PC-3 (cell line): ENCODE measurements at regions of chr4 and their contacts with region 1.

Region 1: GRCh38 chr4:22515888-22516541 is at the start of gene ADGRA3:
- DNase-seq: peak; percentile 71
- ATAC-seq: peak; percentile 79
- H3K4me3 ChIP-seq: peak within 1 kb of the TSS; percentile 72
- H3K27ac ChIP-seq: peak within 1 kb of the TSS; percentile 76
- H3K4me1 ChIP-seq: peaks cover 19% of the 10 kb centered on the region
- H3K27me3 ChIP-seq: no peaks in the 10 kb centered on the region
- CTCF ChIP-seq: no peak
- total RNA-seq, gene ADGRA3: 29.0 and 35.7 TPM in 2 replicates

Region 2: DNA sequence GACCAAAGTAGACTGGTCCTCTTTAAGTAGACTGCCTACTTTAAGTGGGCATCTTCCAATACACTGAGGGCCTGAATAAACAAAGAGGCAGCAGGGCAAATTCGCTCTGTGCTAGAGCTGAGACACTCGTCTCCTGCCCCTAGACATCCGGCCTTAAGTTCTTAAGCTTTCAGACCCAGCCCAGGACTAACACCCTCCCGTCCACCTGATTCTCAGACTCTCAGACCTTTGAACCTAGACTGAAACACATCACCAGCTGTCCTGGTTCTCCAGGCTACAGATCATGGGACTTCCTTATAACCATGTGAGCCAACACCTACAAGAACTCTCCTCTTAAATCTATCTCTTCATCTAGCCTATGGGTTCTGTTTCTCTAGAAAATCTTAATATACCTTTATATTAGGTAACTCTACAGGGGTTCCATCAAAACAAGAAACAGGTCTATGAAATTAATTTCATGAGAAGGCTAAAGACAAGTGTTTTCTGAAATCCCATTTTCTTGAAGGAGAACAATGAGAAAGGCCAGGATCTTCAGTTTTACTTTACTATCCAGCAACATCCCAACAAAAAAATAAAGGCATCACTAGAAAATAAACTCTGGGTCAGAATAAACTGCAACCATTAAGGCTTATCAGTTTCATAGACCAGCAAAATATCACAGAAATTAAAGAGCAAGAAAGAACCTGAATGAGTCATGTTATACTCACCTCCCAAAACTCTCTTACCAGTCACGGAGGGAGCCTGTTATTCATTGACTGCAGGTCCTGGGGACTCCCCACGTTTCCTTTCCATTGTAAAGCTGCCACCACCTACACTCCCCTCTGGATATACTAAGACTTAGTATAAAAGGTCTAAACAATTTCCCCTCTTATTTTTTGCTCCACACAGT is 14.9 kb before region 1 on chr4:
- CTCF ChIA-PET with region 1: no interaction called
- POLR2A ChIA-PET with region 1: interaction called, 6 read pairs
- intact Hi-C with region 1: loop called (anchors 1 kb)
- DNase-seq: peak; percentile 84
- ATAC-seq: peak; percentile 86
- H3K4me3 ChIP-seq: peak overlapping the region; percentile 61
- H3K27ac ChIP-seq: no peak overlapping the region
- H3K4me1 ChIP-seq: peaks cover 22% of the 10 kb centered on the region
- H3K27me3 ChIP-seq: no peaks in the 10 kb centered on the region
- CTCF ChIP-seq: no peak

Region 3: DNA sequence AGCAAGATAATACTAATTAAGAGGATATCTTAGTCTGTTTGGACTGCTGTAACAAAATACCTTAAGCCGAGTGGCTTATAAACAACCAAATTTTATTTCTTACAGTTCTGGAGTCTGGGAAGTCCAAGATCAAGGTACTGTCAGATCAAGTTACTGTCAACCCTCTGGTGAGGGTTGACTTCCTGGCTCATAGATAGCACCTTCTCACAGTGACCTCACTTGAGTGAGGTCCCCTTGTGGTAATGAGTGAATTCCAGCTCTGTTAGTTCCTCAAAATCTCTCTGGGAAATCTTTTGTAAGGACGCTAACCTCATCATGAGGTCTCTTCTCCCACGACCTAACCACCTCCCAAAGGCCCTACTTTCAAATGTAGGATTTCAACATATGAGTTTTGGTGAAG is 36.8 kb after region 1 on chr4:
- CTCF ChIA-PET with region 1: no interaction called
- POLR2A ChIA-PET with region 1: no interaction called
- intact Hi-C with region 1: loop called (anchors 1 kb)
- DNase-seq: peak; percentile 2
- ATAC-seq: no peak
- H3K4me3 ChIP-seq: no peak overlapping the region
- H3K27ac ChIP-seq: no peak overlapping the region
- H3K4me1 ChIP-seq: peaks cover 8% of the 10 kb centered on the region; the same call in 1 of the 2 replicates
- H3K27me3 ChIP-seq: no peaks in the 10 kb centered on the region
- CTCF ChIP-seq: no peak

Region 4: GRCh38 chr4:22607382-22607781 is 91.4 kb after region 1 on chr4:
- CTCF ChIA-PET with region 1: no interaction called
- POLR2A ChIA-PET with region 1: no interaction called
- intact Hi-C with region 1: loop called (anchors 1 kb)
- DNase-seq: peak; percentile 62
- ATAC-seq: peak; percentile 99
- H3K4me3 ChIP-seq: no peak overlapping the region
- H3K27ac ChIP-seq: no peak overlapping the region
- H3K4me1 ChIP-seq: no peaks in the 10 kb centered on the region
- H3K27me3 ChIP-seq: no peaks in the 10 kb centered on the region
- CTCF ChIP-seq: peak; percentile 62

Region 5: DNA sequence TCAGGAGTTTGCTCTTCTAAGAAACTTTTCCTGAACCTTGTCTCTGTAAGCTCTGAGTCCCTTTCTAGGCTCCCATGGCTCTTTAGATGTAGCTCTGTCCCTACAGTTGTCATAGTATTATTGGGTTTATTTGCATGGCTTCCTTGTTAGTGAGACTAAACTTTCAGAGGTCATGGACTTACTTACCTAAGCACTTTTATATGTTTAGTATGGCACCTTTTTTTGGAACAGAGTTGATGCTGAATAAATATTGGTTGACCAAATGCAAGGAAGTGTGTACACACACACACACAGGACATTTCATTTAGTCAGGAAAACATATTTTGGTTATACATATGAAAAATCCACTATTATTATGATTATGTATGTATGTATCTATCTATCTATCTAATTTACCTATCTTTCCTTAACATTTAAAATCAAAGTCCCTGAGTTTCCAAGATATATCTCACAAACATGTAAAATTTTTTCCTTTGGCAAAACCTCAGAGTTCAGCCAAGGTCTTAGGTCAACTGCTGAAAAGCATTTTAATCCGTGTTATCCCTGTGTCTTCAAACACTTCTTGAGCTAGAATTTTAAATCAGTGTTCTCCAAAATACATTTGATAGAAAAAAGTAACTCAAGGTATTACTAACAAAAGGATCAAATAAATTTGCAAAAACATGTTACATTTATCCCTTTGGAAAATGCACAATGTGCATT is 129.6 kb after region 1 on chr4:
- CTCF ChIA-PET with region 1: no interaction called
- POLR2A ChIA-PET with region 1: no interaction called
- intact Hi-C with region 1: no loop called
- DNase-seq: no peak
- ATAC-seq: no peak
- H3K4me3 ChIP-seq: no peak overlapping the region
- H3K27ac ChIP-seq: no peak overlapping the region
- H3K4me1 ChIP-seq: no peaks in the 10 kb centered on the region
- H3K27me3 ChIP-seq: peaks cover 32% of the 10 kb centered on the region
- CTCF ChIP-seq: no peak